ENCODE measurements at regions of chr15 and their contacts with region 1.

Region 1: DNA sequence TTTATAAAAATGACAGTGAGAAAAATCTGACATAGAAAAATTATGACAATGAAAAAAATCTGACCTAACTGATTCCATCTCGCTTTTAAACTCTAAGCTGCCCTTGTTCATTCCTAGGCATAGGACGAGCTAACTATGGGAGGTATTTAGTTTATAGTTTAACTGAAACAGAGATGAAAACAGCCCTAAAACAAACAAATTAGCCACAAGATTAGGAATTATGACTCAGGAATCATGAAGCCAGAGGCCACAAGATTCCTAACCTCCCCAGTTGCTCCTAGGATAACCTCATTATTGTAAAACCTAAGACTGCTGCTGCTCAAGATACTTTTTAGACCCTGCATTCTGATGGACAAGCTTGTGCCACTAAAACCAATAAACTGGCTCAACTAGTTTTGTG is 122.7 kb upstream of the MNS1 start:
- DNase-seq: no peak
- ATAC-seq: no peak

Region 2: DNA sequence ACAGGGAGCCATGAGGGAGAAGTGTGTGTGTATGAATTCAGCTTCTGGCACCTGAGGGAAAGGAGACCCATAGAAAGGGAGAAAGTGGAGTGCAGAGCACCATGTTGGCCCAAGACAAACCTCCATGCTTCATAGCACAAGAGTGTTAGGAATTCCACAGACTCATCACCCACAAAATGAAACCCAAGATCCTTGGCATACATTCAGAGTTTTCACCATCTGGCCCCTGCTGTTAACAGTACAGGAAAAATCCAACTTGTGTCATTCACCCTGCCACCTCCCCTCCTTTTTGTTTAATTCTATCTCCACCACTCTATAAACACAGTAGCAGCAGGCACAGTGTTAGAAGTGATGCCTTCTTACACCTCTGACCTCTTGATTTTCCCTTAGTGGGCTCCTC is 62.8 kb before region 1 on chr15:
- intact Hi-C with region 1: loop called in 1 of 2 experiments (anchors 10 kb)
- DNase-seq: no peak
- ATAC-seq: no peak

Region 3: DNA sequence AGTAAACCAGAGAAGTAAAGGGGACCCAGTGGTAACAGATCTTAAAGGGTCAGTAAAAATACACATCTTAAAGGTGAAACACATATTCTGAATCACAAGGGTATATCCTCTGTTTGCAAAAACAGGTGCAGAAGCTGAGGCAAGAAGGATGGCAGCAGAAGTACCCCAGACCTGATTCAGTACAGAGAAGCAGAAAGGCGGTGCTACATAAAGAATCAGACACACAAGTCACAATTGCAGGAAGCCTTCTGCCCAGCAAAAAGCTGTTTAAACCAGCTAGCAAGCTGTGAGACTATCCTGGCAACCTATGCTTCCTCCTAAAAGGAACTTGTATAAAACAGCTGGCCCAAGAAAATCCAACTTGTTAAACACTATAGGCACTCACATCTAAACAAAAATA is 96.2 kb after region 1 on chr15:
- intact Hi-C with region 1: no loop called
- DNase-seq: no peak
- ATAC-seq: no peak

Measured in left cardiac atrium (tissue), 4 donors.